H1 (cell line): ENCODE measurements at regions of chr19 and their contacts with region 1.

Region 1: DNA sequence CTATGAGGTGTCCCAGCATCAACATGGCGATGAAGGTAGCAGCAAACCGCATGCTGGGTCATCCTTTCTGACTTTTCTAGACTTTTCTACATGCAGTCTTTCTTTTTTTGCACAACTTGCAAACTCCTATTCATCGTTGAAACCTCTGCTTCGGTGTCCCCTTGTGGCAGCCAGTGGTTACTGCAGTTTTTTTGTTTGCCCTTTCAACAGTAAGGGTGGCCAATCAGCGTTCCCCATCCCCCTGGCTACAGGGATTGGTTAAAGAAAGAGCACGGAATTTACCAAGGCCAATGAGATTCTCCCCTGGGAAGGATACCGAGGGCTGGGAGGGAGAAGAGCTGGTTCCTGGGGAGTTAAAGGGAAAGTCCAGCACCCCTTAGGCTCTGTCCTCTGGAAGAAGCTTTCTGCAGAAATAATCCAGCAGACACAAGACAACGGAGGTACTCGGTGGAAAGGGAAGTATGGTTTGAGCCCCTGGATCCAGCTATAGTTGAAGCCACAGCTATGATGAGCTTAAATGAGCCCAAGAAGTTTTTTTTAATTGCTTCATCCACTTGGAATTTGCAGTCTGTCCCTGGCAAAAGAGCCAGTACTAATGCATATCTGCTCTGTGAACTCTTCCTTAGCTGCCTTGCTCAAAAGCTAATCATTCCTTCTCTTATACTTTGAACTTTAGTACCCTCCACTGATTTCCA is 5.6 kb upstream of the LSM4 start:
- DNase-seq: peak; percentile 87
- H3K4me3 ChIP-seq: peak overlapping the region; percentile 28 to 53 (median 38); a peak in 6 of 8 replicates
- H3K27ac ChIP-seq: no peak overlapping the region; the same call in 1 of the 2 replicates
- H3K4me1 ChIP-seq: peaks cover 0 to 7% (median 4%) of the 10 kb centered on the region in 4 experiments; a peak in 5 of 7 replicates
- H3K27me3 ChIP-seq: no peaks in the 10 kb centered on the region
- CTCF ChIP-seq: peak; percentile 45 to 82 (median 69)
- EP300 ChIP-seq: no peak
- POLR2A ChIP-seq: 0 out of 3 replicates have a peak, but pooled peaks of 1 of the 2 experiments have one; percentile 49
- RAD21 ChIP-seq: peak; percentile 60 to 72

Region 2: GRCh38 chr19:18291590-18292461 is 36.7 kb before region 1 on chr19:
- CTCF ChIA-PET with region 1: interaction called, 14 read pairs
- POLR2A ChIA-PET with region 1: interaction called, 10 read pairs
- DNase-seq: peak in 1 of 2 experiments; percentile 88
- H3K4me3 ChIP-seq: peak overlapping the region; percentile 55 to 75 (median 66)
- H3K27ac ChIP-seq: peak overlapping the region; percentile 81
- H3K4me1 ChIP-seq: peaks cover 4 to 35% (median 27%) of the 10 kb centered on the region in 4 experiments
- H3K27me3 ChIP-seq: peaks cover 0 to 5% (median 0%) of the 10 kb centered on the region in 4 experiments; a peak in 2 of 7 replicates
- CTCF ChIP-seq: no peak
- EP300 ChIP-seq: no peak
- POLR2A ChIP-seq: no peak; a peak in 1 of 3 replicates
- RAD21 ChIP-seq: no peak

Region 3: DNA sequence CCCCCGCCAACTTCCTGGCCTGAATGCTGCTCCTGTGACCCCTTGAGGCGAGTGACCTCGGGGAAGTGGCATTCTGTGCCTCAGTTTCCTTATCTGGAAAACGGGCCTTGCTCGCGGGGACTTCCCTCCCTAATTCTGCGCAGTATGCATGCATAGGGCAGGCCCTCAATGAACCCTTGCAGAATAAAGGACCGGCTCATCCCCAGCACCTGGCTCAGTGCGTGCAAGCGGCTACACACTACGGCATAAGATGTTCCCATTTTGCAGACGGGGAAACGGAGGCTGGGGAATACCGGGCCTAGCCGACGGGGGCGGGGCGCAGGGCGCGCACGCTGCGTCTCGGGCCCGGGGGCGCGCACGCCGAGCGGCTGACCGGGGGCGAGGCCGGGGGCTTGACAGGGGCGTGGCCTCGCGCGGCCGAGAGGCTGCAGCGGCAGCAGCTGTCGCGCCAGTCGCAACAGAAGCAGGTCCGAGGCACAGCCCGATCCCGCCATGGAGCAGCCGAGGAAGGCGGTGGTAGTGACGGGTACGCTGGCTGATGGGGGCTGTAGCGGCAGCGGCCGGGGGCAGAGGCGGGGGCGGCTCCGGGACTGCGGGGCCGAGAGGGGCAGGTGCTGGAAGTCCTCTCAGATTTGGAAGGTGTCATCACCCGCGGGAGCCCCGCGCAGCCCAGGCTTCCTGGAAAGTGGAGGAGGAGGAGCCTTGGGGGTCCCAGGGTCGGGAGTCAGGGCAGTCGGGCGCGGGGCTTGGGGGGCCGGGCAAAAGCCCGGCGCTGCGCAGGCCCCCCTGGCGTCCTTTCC is 11.9 kb after region 1 on chr19 and contains the start of gene PGPEP1:
- CTCF ChIA-PET with region 1: interaction called, 73 read pairs
- POLR2A ChIA-PET with region 1: interaction called, 5 read pairs
- DNase-seq: peak in 1 of 2 experiments; percentile 97
- H3K4me3 ChIP-seq: peak within 1 kb of the TSS; percentile 55 to 85 (median 62)
- H3K27ac ChIP-seq: no peak within 1 kb of the TSS
- H3K4me1 ChIP-seq: peaks cover 0 to 11% (median 7%) of the 10 kb centered on the region in 4 experiments; a peak in 6 of 7 replicates
- H3K27me3 ChIP-seq: 0 out of 7 replicates have a peak, but pooled peaks cover 0 to 2% (median 0%) of the 10 kb centered on the region in 4 experiments
- CTCF ChIP-seq: no peak
- EP300 ChIP-seq: no peak
- POLR2A ChIP-seq: 0 out of 3 replicates have a peak, but pooled peaks of 1 of the 2 experiments have one; percentile 26
- RAD21 ChIP-seq: no peak
- total RNA-seq, gene PGPEP1: 33.2 and 33.4 TPM in 2 replicates

Region 4: DNA sequence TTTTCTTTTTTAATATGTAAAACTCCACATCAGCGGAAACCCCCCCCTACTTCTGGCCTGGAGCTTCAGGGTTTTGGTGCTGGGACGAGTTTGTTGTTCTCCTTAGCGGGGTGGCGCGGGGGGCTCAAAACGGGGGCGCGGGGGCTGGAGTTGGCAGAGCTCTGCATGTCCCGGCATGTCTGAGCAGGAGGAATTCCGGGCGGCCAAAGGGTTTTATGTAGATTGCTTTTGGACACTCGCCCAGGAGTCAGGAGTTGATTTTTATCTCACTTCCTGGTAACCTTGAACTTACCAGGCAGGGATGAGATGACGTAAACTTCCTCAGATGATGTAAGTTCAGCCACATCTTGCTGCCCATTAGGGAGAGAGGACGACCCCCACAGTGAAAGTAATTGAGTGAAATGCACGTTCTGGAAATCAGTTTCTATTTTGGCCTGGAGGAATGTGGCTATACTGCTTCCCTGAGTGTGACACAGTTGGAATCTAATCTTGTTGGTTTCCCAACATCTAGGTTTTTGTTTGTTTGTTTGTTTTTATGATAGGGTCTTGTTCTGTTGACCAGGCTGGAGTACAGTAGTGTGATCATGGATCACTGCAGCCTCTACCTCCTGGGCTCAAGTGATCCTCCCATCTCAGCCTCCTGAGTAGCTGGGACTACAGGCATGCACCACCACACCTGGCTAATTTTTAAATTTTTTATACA is 36.5 kb after region 1 on chr19:
- CTCF ChIA-PET with region 1: interaction called, 12 read pairs
- POLR2A ChIA-PET with region 1: no interaction called
- DNase-seq: no peak
- H3K4me3 ChIP-seq: no peak overlapping the region
- H3K27ac ChIP-seq: peak overlapping the region; percentile 87; the same call in 1 of the 2 replicates
- H3K4me1 ChIP-seq: peaks cover 1 to 14% (median 8%) of the 10 kb centered on the region in 4 experiments; a peak in 5 of 7 replicates
- H3K27me3 ChIP-seq: no peaks in the 10 kb centered on the region
- CTCF ChIP-seq: no peak
- EP300 ChIP-seq: 0 out of 3 replicates have a peak, but pooled peaks of 1 of the 2 experiments have one; percentile 14
- POLR2A ChIP-seq: no peak
- RAD21 ChIP-seq: no peak

Region 5: GRCh38 chr19:18388100-18388959 is 59.8 kb after region 1 on chr19:
- CTCF ChIA-PET with region 1: interaction called, 12 read pairs
- POLR2A ChIA-PET with region 1: interaction called, 3 read pairs
- DNase-seq: peak in 1 of 2 experiments; percentile 98
- H3K4me3 ChIP-seq: peak overlapping the region in 3 of 4 experiments; percentile 17 to 46 (median 20); a peak in 5 of 8 replicates
- H3K27ac ChIP-seq: no peak overlapping the region
- H3K4me1 ChIP-seq: peaks cover 3 to 4% (median 3%) of the 10 kb centered on the region in 4 experiments
- H3K27me3 ChIP-seq: peaks cover 0 to 23% (median 14%) of the 10 kb centered on the region in 4 experiments; a peak in 6 of 7 replicates
- CTCF ChIP-seq: peak; percentile 97 to 99 (median 98)
- EP300 ChIP-seq: no peak
- POLR2A ChIP-seq: no peak
- RAD21 ChIP-seq: peak; percentile 52 to 73; a peak in 3 of 4 replicates

Region 6: GRCh38 chr19:18453269-18454024 is 125.0 kb after region 1 on chr19:
- CTCF ChIA-PET with region 1: no interaction called
- POLR2A ChIA-PET with region 1: no interaction called
- DNase-seq: no peak
- H3K4me3 ChIP-seq: no peak overlapping the region
- H3K27ac ChIP-seq: no peak overlapping the region
- H3K4me1 ChIP-seq: no peaks in the 10 kb centered on the region; a peak in 3 of 7 replicates
- H3K27me3 ChIP-seq: no peaks in the 10 kb centered on the region
- CTCF ChIP-seq: no peak
- EP300 ChIP-seq: no peak
- POLR2A ChIP-seq: no peak
- RAD21 ChIP-seq: no peak